ENCODE measurements at regions of chr11 and their contacts with region 1.

Region 1: GRCh38 chr11:74055938-74056337 is 47.1 kb upstream of the UCP3 start:
- DNase-seq: peak; percentile 52
- ATAC-seq: peak; percentile 72
- H3K4me3 ChIP-seq: no peak overlapping the region
- H3K27ac ChIP-seq: no peak overlapping the region
- H3K4me1 ChIP-seq: 0 out of 2 replicates have a peak, but pooled peaks cover 4% of the 10 kb centered on the region
- H3K27me3 ChIP-seq: no peaks in the 10 kb centered on the region
- CTCF ChIP-seq: no peak

Region 2: DNA sequence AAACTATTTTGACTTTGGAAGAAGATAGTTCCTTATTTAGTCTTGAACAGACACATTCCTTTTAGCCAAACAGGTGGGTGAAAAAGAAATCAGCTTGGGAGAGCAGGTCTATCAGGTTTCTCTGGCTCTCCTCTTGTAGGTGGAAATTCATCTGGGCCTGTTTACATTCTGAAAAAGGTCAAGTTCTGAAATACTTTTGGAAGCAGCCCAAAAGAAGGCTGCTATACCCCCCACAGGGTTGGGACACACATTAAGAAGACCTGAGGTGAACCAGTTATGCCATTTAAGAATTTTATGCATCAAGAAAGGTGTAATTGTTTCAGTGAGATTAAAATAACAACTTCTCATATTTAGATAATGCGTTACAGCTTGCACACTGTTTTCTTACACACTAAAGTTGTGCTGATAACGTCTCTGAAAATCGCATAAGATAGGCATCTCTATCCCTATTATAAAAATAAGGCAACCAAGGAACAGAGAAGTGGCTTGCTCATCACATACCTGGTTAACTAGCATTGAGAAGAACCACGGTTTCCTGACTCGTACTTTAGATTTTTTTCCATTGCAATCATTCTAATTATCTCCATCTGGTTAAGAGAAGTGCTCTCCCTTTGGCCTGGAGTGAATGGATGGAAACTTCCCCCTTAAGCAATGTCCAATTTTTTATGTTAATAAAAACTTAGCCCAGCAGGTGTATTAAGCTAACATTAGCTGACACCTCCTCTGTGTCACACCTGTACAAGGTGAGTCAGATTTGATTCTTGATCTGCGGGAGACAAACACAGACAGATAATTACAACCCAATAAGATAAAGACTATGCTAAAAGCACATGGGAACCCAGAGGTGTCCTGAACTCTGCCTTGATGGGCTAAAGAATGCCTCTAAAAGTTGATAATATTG is 13.5 kb after region 1 on chr11:
- CTCF ChIA-PET with region 1: no interaction called
- POLR2A ChIA-PET with region 1: interaction called, 20 read pairs
- in situ Hi-C with region 1: no loop called
- intact Hi-C with region 1: no loop called
- DNase-seq: no peak
- ATAC-seq: no peak
- H3K4me3 ChIP-seq: no peak overlapping the region
- H3K27ac ChIP-seq: no peak overlapping the region
- H3K4me1 ChIP-seq: peaks cover 14% of the 10 kb centered on the region
- H3K27me3 ChIP-seq: no peaks in the 10 kb centered on the region
- CTCF ChIP-seq: no peak

Region 3: DNA sequence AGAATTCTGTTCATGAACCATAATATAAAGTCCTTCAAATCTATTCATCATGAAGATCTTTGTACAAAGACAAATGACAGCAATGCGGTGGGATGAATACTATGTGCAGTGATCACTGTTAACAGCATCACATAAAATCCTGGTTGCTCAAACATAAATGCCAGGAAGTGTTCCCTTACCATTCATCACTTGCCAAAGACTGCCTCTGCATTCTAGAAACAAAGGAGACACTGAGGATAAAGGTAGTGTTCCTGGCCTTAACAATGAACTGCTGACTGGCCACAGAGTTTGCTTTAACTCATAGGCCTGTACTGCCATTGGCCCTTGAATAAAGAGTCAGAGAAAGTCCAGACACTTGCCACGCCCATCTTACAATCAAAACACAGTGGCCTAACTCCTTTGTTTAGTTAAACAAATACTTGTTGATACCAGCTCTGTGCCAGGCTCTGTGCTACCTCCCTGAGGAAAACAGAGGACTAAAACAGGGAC is 85.3 kb after region 1 on chr11:
- CTCF ChIA-PET with region 1: no interaction called
- POLR2A ChIA-PET with region 1: no interaction called
- in situ Hi-C with region 1: no loop called
- intact Hi-C with region 1: no loop called
- DNase-seq: no peak
- ATAC-seq: 0 out of 2 replicates have a peak, but pooled peaks have one; percentile 11
- H3K4me3 ChIP-seq: no peak overlapping the region
- H3K27ac ChIP-seq: peak overlapping the region; percentile 98
- H3K4me1 ChIP-seq: peaks cover 65% of the 10 kb centered on the region
- H3K27me3 ChIP-seq: no peaks in the 10 kb centered on the region
- CTCF ChIP-seq: no peak